ENCODE measurements at regions of chr6 and their contacts with region 1.

Region 1: GRCh38 chr6:42984001-42984923 is at the start of gene PPP2R5D:
- DNase-seq: peak; percentile 98
- H3K4me3 ChIP-seq: peak within 1 kb of the TSS; percentile 72 to 87
- H3K27ac ChIP-seq: peak within 1 kb of the TSS; percentile 79 to 91
- H3K4me1 ChIP-seq: peaks cover 0 to 13% of the 10 kb centered on the region in 2 donors
- H3K27me3 ChIP-seq: no peaks in the 10 kb centered on the region
- CTCF ChIP-seq: peak in 2 of 4 experiments; percentile 21 to 26
- POLR2A ChIP-seq: peak; percentile 74 to 95
- total RNA-seq, gene PPP2R5D: 28.7 to 43.8 (median 36.4) TPM

Region 2: GRCh38 chr6:42796171-42796570 is 188.1 kb before region 1 on chr6:
- intact Hi-C with region 1: no loop called
- DNase-seq: no peak
- H3K4me3 ChIP-seq: no peak overlapping the region
- H3K27ac ChIP-seq: no peak overlapping the region
- H3K4me1 ChIP-seq: peaks cover 0 to under 1% of the 10 kb centered on the region in 2 donors
- H3K27me3 ChIP-seq: no peaks in the 10 kb centered on the region
- CTCF ChIP-seq: no peak
- POLR2A ChIP-seq: no peak

Region 3: GRCh38 chr6:42928986-42929820 is 55.1 kb before region 1 on chr6 and contains the start of gene CNPY3:
- intact Hi-C with region 1: loop called (anchors 10 kb)
- DNase-seq: peak; percentile 91 to 93
- H3K4me3 ChIP-seq: peak within 1 kb of the TSS; percentile 82 to 98
- H3K27ac ChIP-seq: peak within 1 kb of the TSS; percentile 92 to 96
- H3K4me1 ChIP-seq: no peaks in the 10 kb centered on the region
- H3K27me3 ChIP-seq: no peaks in the 10 kb centered on the region
- CTCF ChIP-seq: peak in 3 of 4 experiments; percentile 8 to 29 (median 14)
- POLR2A ChIP-seq: peak in 1 of 2 donors; percentile 56
- total RNA-seq, gene CNPY3: 23.2 to 130 (median 39.1) TPM

Region 4: DNA sequence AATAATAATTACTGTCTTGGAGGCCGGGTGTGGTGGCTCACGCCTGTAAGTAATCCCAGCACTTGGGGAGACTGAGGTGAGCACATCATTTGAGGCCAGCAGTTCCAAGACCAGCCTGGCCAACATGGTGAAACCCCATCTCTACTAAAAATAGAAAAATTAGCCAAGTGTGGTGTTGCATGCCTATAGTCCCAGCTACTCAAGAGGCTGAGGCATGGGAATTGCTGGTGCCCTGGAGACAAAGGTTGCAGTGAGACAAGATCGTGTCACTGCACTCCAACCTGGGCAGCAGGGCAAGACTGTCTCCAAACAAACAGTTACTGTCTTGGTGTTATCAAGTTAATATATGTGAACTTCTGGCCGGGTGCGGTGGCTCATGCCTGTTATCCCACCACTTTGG is 42.1 kb after region 1 on chr6:
- intact Hi-C with region 1: no loop called
- DNase-seq: no peak
- H3K4me3 ChIP-seq: no peak overlapping the region
- H3K27ac ChIP-seq: no peak overlapping the region
- H3K4me1 ChIP-seq: peaks cover 0 to 8% of the 10 kb centered on the region in 2 donors
- H3K27me3 ChIP-seq: no peaks in the 10 kb centered on the region
- CTCF ChIP-seq: no peak
- POLR2A ChIP-seq: no peak

Region 5: GRCh38 chr6:43297644-43298564 is 313.6 kb after region 1 on chr6 and contains the start of gene SLC22A7:
- intact Hi-C with region 1: no loop called
- DNase-seq: no peak
- H3K4me3 ChIP-seq: no peak within 1 kb of the TSS
- H3K27ac ChIP-seq: no peak within 1 kb of the TSS
- H3K4me1 ChIP-seq: no peaks in the 10 kb centered on the region
- H3K27me3 ChIP-seq: no peaks in the 10 kb centered on the region
- CTCF ChIP-seq: no peak
- POLR2A ChIP-seq: no peak
- total RNA-seq, gene SLC22A7: not detected